Left ventricle myocardium superior (tissue), 1 donor: ENCODE measurements at regions of chr20 and their contacts with region 1.

Region 1: DNA sequence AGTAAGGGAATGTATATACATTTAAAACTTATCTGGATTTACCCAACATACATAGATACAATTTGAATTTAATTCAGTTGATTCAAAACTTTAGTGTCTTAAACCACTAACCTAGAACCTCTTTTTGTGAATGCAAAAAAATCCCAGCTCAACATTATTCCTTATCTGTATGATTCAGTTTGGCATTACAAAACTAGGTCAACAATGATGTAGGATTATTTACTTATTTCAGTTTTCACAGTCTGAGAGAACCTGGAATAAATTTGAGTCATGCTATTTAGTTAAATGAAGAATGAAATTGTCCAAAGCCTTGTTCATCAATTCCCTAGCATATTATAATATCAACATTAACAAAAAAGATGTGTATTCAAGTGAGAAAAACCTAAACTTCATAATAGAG is 7.4 kb upstream of the PLCB1 start:
- DNase-seq: no peak
- ATAC-seq: no peak

Region 2: GRCh38 chr20:8082025-8082424 is 42.6 kb before region 1 on chr20:
- intact Hi-C with region 1: no loop called
- DNase-seq: no peak
- ATAC-seq: no peak

Region 3: DNA sequence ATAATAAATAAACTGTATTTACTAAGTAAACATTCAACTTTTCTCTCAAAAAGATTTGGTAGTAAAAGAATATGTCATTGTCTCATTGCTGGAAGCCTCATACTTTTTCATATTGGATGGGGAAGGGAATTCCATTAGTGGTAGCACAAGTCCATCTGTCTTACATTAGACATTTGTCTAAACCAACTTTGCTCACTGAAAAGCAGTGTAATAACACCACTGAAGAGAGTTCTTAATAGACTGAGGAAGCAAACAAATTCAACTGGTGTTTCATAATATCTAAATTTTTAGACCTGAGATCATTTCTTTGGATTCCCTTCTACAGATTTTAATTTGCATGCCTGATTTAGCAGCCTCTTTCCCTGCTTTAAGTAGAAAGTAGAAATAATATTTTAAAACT is 70.1 kb after region 1 on chr20:
- intact Hi-C with region 1: loop called (anchors 5 kb)
- DNase-seq: no peak
- ATAC-seq: peak; percentile 37